OCI-LY7 (cell line): ENCODE measurements at regions of chr6 and their contacts with region 1.

Region 1: DNA sequence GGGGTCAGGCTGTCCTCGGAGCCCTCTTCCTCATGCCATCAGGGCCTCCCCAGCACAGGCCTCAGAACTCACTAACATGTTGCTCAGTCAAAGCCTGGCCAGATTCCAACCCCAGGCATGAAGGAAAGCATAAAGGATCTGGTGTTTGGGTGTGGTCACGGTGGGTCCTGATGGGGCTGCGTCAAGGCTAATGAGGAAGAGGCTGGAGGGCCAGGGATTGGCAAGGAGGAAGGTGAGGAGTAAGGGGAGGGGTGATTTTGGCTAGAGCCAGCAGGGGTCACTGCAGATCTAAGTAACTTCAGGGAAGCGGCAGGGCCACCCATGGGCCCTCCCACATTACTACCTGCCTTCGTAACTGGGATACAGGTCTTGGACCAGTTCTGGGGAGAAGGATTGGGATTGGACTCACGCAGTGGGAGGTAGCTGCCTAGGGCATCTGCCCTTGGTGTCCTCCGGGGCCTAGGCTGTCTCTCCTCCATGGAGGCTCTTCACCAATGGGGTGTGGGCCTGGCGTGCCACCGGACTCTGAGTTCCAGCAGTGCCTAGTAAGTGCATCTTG is 36.2 kb upstream of the MRPS18A start:
- DNase-seq: peak; percentile 86
- H3K4me3 ChIP-seq: no peak overlapping the region
- H3K27ac ChIP-seq: no peak overlapping the region
- H3K4me1 ChIP-seq: peaks cover 25% of the 10 kb centered on the region
- CTCF ChIP-seq: peak; percentile 86

Region 2: GRCh38 chr6:43516697-43517504 is 206.9 kb before region 1 on chr6 and contains the starts of genes POLR1C and YIPF3:
- CTCF ChIA-PET with region 1: no interaction called
- POLR2A ChIA-PET with region 1: no interaction called
- intact Hi-C with region 1: no loop called
- DNase-seq: peak; percentile 99
- H3K4me3 ChIP-seq: peak within 1 kb of the TSS; percentile 95
- H3K27ac ChIP-seq: peak within 1 kb of the TSS; percentile 52
- H3K4me1 ChIP-seq: peaks cover 20% of the 10 kb centered on the region
- CTCF ChIP-seq: no peak
- total RNA-seq, gene POLR1C: 40.7 and 46.0 TPM in 2 replicates
- total RNA-seq, gene YIPF3: 31.8 and 38.2 TPM in 2 replicates

Region 3: GRCh38 chr6:43702534-43703440 is 21.0 kb before region 1 on chr6:
- CTCF ChIA-PET with region 1: interaction called, 5 read pairs
- POLR2A ChIA-PET with region 1: interaction called, 13 read pairs
- intact Hi-C with region 1: no loop called
- DNase-seq: peak; percentile 62
- H3K4me3 ChIP-seq: no peak overlapping the region
- H3K27ac ChIP-seq: no peak overlapping the region
- H3K4me1 ChIP-seq: peaks cover 59% of the 10 kb centered on the region
- CTCF ChIP-seq: no peak

Region 4: GRCh38 chr6:43758617-43759050 is 34.8 kb after region 1 on chr6:
- CTCF ChIA-PET with region 1: interaction called, 4 read pairs
- POLR2A ChIA-PET with region 1: interaction called, 3 read pairs
- intact Hi-C with region 1: loop called (anchors 1 kb)
- DNase-seq: peak; percentile 61
- H3K4me3 ChIP-seq: no peak overlapping the region
- H3K27ac ChIP-seq: no peak overlapping the region
- H3K4me1 ChIP-seq: peaks cover 20% of the 10 kb centered on the region
- CTCF ChIP-seq: peak; percentile 92

Region 5: DNA sequence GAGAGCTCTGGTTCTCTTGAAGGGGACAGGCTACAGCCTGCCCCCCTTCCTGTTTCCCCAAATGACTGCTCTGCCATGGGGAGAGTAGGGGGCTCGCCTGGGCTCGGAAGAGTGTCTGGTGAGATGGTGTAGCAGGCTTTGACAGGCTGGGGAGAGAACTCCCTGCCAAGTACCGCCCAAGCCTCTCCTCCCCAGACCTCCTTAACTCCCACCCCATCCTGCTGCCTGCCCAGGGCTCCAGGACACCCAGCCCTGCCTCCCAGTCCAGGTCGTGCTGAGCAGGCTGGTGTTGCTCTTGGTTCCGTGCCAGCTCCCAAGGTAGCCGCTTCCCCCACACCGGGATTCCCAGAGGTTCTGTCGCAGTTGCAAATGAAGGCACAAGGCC is 56.0 kb after region 1 on chr6:
- CTCF ChIA-PET with region 1: no interaction called
- POLR2A ChIA-PET with region 1: no interaction called
- intact Hi-C with region 1: no loop called
- DNase-seq: no peak
- H3K4me3 ChIP-seq: no peak overlapping the region
- H3K27ac ChIP-seq: no peak overlapping the region
- H3K4me1 ChIP-seq: peaks cover 15% of the 10 kb centered on the region
- CTCF ChIP-seq: no peak

Region 6: GRCh38 chr6:43803783-43804549 is 80.2 kb after region 1 on chr6:
- CTCF ChIA-PET with region 1: no interaction called
- POLR2A ChIA-PET with region 1: no interaction called
- intact Hi-C with region 1: no loop called
- DNase-seq: no peak
- H3K4me3 ChIP-seq: no peak overlapping the region
- H3K27ac ChIP-seq: no peak overlapping the region
- H3K4me1 ChIP-seq: no peaks in the 10 kb centered on the region
- CTCF ChIP-seq: no peak

Region 7: DNA sequence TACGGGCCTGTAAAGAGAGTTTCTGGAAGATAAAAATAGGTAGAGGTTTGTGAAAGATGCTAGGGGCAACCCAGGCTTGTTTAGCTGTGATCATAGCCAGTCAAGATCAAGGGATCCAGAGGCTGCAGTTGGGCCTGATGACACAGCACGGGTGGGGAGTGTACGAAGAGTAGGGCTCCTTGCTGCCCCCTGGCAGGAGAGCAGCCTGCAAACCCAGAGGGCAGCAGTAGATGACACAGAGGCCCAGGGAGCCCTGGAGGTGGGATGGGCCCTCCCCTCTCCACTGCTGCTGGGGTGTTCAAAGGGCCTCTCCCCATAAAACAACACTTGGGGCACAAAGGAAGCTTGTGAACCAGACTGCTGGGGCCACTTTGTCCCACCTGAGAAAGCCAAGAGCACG is 93.4 kb after region 1 on chr6:
- CTCF ChIA-PET with region 1: no interaction called
- POLR2A ChIA-PET with region 1: no interaction called
- intact Hi-C with region 1: loop called (anchors 5 kb)
- DNase-seq: peak; percentile 42
- H3K4me3 ChIP-seq: no peak overlapping the region
- H3K27ac ChIP-seq: no peak overlapping the region
- H3K4me1 ChIP-seq: no peaks in the 10 kb centered on the region
- CTCF ChIP-seq: peak; percentile 64

Region 8: GRCh38 chr6:43838276-43839036 is 114.6 kb after region 1 on chr6:
- CTCF ChIA-PET with region 1: no interaction called
- POLR2A ChIA-PET with region 1: no interaction called
- intact Hi-C with region 1: loop called (anchors 1 kb)
- DNase-seq: peak; percentile 47
- H3K4me3 ChIP-seq: no peak overlapping the region
- H3K27ac ChIP-seq: no peak overlapping the region
- H3K4me1 ChIP-seq: no peaks in the 10 kb centered on the region
- CTCF ChIP-seq: peak; percentile 73

Region 9: DNA sequence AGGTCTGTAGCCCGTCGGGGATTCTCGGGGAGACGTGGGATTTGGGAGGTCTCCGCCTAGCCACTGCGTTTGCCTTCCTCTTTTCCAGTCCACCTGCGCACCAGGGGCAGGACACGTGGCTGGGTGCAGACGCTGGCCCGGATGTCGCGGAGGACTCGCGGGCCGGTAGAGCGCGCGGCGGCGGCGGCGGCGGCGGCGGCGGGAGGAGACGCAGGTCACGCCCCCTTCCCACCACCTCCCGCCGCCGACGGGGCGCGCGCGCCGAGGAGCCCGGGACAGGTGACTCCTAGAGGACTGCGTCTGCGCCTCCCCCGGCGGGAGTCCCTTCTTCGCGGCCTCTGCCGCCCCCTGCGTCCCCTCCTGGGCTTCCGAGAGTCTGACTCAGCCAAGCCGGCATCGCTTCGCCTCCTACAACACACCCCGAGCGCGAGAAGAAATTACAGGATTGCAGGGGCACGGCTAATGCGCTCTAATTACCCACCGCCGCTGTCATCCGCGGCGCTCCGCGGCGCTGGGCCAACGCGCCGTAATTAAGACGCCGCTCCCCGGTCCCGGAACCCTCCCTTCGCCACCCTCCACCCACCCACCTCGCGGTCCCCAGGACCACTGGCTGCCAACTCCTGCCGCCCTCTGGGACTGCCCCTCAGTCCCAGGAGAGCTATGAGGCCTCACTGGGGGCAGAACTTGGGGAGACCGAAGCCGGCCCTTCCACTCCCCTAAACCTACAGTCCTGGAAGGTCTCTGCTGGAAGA is 279.0 kb after region 1 on chr6:
- CTCF ChIA-PET with region 1: no interaction called
- POLR2A ChIA-PET with region 1: no interaction called
- intact Hi-C with region 1: loop called (anchors 5 kb)
- DNase-seq: peak; percentile 15
- H3K4me3 ChIP-seq: peak overlapping the region; percentile 22
- H3K27ac ChIP-seq: no peak overlapping the region
- H3K4me1 ChIP-seq: peaks cover 15% of the 10 kb centered on the region
- CTCF ChIP-seq: no peak

Region 10: DNA sequence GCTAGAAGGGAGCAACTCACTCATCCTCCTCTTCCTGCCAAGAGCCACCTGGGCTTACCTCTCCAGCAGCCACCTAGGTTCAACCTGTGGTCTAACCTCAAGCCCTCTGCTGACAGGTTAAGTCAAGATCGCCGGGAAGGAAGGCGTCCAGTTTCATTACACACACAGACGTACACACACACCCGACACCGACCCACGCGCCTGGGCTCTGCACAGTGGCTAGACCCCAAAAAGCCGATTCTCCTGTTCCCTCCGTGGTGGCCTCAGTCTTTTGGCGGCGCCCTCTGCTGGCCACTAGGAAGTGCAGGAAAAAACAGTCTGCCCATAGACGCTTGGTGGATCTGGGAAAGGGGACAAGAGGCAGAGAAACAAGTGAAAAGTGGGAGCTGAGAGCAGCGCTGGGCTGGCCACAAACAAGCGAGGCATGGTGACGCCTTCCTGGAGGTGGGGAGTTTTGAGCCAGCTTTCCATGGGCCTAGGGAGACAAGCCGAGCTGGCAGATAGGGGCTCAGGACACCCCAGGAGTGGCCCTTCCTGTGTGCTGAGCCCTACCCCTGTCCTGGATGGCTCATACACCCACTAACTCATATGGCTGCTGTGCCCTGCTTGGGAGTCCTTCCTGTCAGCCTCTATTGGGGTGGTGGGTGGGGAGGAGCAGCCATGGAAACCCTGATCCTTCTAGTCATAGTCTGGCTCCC is 350.8 kb after region 1 on chr6:
- CTCF ChIA-PET with region 1: interaction called, 5 read pairs
- POLR2A ChIA-PET with region 1: interaction called, 4 read pairs
- intact Hi-C with region 1: loop called (anchors 1 kb)
- DNase-seq: peak; percentile 88
- H3K4me3 ChIP-seq: peak overlapping the region; percentile 68
- H3K27ac ChIP-seq: no peak overlapping the region
- H3K4me1 ChIP-seq: peaks cover 46% of the 10 kb centered on the region
- CTCF ChIP-seq: peak; percentile 93